CD4-positive, alpha-beta T cell (primary cell): ENCODE measurements at regions of chr1 and their contacts with region 1.

Region 1: DNA sequence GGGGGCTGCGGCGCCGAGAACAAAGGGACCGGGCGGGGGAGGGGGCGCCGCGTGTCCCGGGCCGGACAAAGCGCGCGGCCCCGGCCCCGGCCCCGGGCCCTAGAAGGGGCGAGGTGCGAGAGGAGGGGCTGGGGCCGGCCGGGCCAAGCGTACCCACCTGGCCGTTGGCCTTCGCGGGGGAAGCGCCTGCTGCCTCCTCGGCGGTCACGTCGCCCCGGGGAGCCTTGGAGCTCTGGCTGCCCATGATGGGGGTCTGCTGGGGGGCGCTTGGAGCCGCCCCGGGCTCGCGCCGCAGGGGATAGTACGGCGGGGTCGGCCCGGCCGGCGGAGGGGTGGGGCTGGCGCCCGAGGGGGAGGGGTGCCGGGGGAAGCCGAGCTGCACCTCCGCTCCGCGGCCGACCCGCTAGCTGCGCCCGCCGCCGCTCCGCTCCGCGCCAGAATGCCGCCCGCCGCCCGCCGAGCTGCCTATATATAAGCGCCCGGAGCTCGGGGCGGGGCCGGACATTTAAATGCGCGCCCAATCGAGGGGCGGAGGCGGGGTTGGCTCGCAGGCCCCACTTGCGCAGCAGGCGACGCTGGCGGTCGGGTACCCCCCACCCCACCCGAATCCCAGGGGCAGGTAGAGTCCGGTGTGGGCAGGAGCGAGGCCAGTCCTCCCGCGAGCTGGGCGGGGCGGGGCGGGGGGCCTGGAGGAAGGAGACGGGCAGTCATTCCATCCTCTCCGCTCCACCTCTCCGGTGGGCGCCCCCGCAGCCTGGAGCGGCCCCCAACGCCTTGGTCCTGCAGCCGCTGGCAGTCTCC is at the start of gene MARCKSL1:
- DNase-seq: peak; percentile 79 to 94 (median 86)
- ATAC-seq: peak; percentile 66
- H3K4me3 ChIP-seq: peak within 1 kb of the TSS; percentile 59
- H3K4me3 Mint-ChIP-seq: peak within 1 kb of the TSS; percentile 94
- H3K27ac ChIP-seq: peak within 1 kb of the TSS in 1 of 2 donors; percentile 52
- H3K27ac Mint-ChIP-seq: peak within 1 kb of the TSS; percentile 87
- H3K4me1 ChIP-seq: peaks cover 49% of the 10 kb centered on the region
- H3K4me1 Mint-ChIP-seq: peaks cover 50% of the 10 kb centered on the region
- H3K27me3 ChIP-seq: no peaks in the 10 kb centered on the region
- H3K27me3 Mint-ChIP-seq: no peaks in the 10 kb centered on the region
- CTCF ChIP-seq: no peak
- total RNA-seq, gene MARCKSL1: 23.4 to 23.6 TPM

Region 2: GRCh38 chr1:32082022-32082421 is 254.0 kb before region 1 on chr1:
- CTCF ChIA-PET with region 1: no interaction called
- POLR2A ChIA-PET with region 1: no interaction called
- intact Hi-C with region 1: no loop called
- DNase-seq: no peak
- ATAC-seq: no peak
- H3K4me3 ChIP-seq: no peak overlapping the region
- H3K4me3 Mint-ChIP-seq: no peak overlapping the region
- H3K27ac ChIP-seq: no peak overlapping the region
- H3K27ac Mint-ChIP-seq: no peak overlapping the region
- H3K4me1 ChIP-seq: no peaks in the 10 kb centered on the region
- H3K4me1 Mint-ChIP-seq: peaks cover 4% of the 10 kb centered on the region
- H3K27me3 ChIP-seq: no peaks in the 10 kb centered on the region
- H3K27me3 Mint-ChIP-seq: no peaks in the 10 kb centered on the region
- CTCF ChIP-seq: no peak

Region 3: DNA sequence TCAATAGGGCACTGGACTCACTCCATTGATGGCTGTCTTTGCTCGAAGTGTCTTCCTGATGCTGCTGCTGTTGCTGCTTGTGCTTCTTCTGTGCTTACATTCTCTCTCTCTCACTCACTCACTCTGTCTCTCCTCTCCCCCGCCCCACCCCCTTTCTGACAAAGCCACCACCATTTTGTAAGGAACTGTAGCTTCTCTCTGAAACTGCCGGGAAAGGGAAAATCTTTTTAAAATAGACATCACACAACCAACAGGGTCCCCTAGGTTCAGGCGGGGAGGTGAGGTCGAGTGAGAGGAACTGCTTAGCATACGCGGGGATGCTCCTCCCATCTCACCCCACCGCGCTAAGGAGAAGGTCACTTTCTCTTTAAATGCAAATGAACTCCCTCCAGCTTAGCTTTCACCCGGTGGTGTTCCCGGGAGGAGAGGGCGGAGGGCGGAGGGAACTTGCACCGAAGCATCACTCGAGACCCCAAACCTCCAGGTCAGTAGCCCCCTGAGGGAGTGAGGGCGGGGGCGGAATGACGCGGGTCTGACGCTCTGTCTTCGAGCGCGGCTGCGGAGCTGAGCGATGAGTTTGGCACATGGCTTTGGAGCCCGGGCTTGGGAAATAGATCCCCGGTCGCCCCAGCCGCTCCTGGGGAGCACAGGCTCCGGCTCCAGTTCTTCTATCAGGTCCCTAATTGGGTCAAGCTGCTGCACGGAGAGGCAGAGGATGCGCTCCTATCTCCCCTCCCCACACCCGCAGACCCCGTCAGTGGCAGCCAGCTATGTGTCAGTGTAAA is 135.6 kb before region 1 on chr1 and contains the start of gene CCDC28B:
- CTCF ChIA-PET with region 1: no interaction called
- POLR2A ChIA-PET with region 1: interaction called, 23 read pairs
- intact Hi-C with region 1: no loop called
- DNase-seq: peak in 13 of 14 experiments; percentile 15 to 74 (median 46)
- ATAC-seq: peak; percentile 54
- H3K4me3 ChIP-seq: peak within 1 kb of the TSS; percentile 87
- H3K4me3 Mint-ChIP-seq: peak within 1 kb of the TSS; percentile 82
- H3K27ac ChIP-seq: peak within 1 kb of the TSS; percentile 81 to 97
- H3K27ac Mint-ChIP-seq: peak within 1 kb of the TSS; percentile 95
- H3K4me1 ChIP-seq: peaks cover 75% of the 10 kb centered on the region
- H3K4me1 Mint-ChIP-seq: peaks cover 64% of the 10 kb centered on the region
- H3K27me3 ChIP-seq: no peaks in the 10 kb centered on the region
- H3K27me3 Mint-ChIP-seq: no peaks in the 10 kb centered on the region
- CTCF ChIP-seq: no peak
- total RNA-seq, gene CCDC28B: 4.0 to 5.7 TPM

Region 4: GRCh38 chr1:32240140-32240951 is 95.6 kb before region 1 on chr1:
- CTCF ChIA-PET with region 1: interaction called, 6 read pairs
- POLR2A ChIA-PET with region 1: interaction called, 24 read pairs
- intact Hi-C with region 1: loop called in 1 of 2 experiments (anchors 5 kb)
- DNase-seq: peak in 13 of 14 experiments; percentile 38 to 86 (median 63)
- ATAC-seq: peak; percentile 75
- H3K4me3 ChIP-seq: peak overlapping the region; percentile 90
- H3K4me3 Mint-ChIP-seq: peak overlapping the region; percentile 94
- H3K27ac ChIP-seq: peak overlapping the region; percentile 15 to 50
- H3K27ac Mint-ChIP-seq: peak overlapping the region; percentile 64
- H3K4me1 ChIP-seq: peaks cover 33% of the 10 kb centered on the region
- H3K4me1 Mint-ChIP-seq: peaks cover 25% of the 10 kb centered on the region
- H3K27me3 ChIP-seq: no peaks in the 10 kb centered on the region
- H3K27me3 Mint-ChIP-seq: no peaks in the 10 kb centered on the region
- CTCF ChIP-seq: peak; percentile 52

Region 5: GRCh38 chr1:32266921-32267591 is 68.9 kb before region 1 on chr1:
- CTCF ChIA-PET with region 1: no interaction called
- POLR2A ChIA-PET with region 1: interaction called, 7 read pairs
- intact Hi-C with region 1: loop called in 1 of 2 experiments (anchors 5 kb)
- DNase-seq: peak in 4 of 14 experiments; percentile 21 to 67 (median 58)
- ATAC-seq: peak; percentile 54
- H3K4me3 ChIP-seq: no peak overlapping the region
- H3K4me3 Mint-ChIP-seq: peak overlapping the region; percentile 81
- H3K27ac ChIP-seq: peak overlapping the region; percentile 52 to 57
- H3K27ac Mint-ChIP-seq: peak overlapping the region; percentile 92
- H3K4me1 ChIP-seq: peaks cover 91% of the 10 kb centered on the region
- H3K4me1 Mint-ChIP-seq: peaks cover 60% of the 10 kb centered on the region
- H3K27me3 ChIP-seq: no peaks in the 10 kb centered on the region
- H3K27me3 Mint-ChIP-seq: no peaks in the 10 kb centered on the region
- CTCF ChIP-seq: no peak

Region 6: DNA sequence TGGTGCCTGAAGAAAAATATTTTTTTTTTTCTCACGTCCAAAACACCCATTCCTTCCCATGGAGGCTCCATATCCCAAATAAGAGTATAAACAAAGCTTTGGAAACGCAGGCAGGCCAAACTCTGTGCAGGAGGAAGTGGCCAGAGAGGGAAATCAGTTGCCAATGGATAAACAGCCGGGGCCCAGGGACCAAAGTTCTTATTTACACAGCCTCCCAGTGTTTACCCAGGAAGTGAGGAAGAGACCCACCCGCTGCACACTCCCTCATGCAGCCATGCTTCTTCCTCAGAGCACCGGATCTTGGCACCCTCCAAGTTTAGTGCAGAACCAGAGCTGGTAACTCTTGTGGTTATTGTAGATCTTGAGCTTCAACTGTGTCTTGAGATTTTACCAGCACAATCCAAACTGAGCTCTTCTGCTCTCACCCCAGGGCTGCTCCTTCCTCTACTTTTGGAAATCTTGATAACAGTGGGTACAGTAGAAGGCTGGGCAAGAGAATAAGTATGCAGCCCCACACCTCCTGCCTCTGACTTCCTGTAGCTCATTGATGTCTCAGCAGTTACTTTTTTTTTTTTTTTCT is 14.2 kb before region 1 on chr1:
- CTCF ChIA-PET with region 1: interaction called, 9 read pairs
- POLR2A ChIA-PET with region 1: interaction called, 74 read pairs
- intact Hi-C with region 1: no loop called
- DNase-seq: peak in 10 of 14 experiments; percentile 7 to 70 (median 29)
- ATAC-seq: peak; percentile 87
- H3K4me3 ChIP-seq: peak overlapping the region; percentile 25
- H3K4me3 Mint-ChIP-seq: peak overlapping the region; percentile 62
- H3K27ac ChIP-seq: peak overlapping the region; percentile 12 to 49
- H3K27ac Mint-ChIP-seq: peak overlapping the region; percentile 82
- H3K4me1 ChIP-seq: peaks cover 62% of the 10 kb centered on the region
- H3K4me1 Mint-ChIP-seq: peaks cover 51% of the 10 kb centered on the region
- H3K27me3 ChIP-seq: no peaks in the 10 kb centered on the region
- H3K27me3 Mint-ChIP-seq: no peaks in the 10 kb centered on the region
- CTCF ChIP-seq: no peak

Region 7: GRCh38 chr1:32372149-32372756 is 36.3 kb after region 1 on chr1:
- CTCF ChIA-PET with region 1: interaction called, 20 read pairs
- POLR2A ChIA-PET with region 1: interaction called, 17 read pairs
- intact Hi-C with region 1: loop called (anchors 2 kb)
- DNase-seq: peak; percentile 34 to 88 (median 48)
- ATAC-seq: peak; percentile 85
- H3K4me3 ChIP-seq: no peak overlapping the region
- H3K4me3 Mint-ChIP-seq: no peak overlapping the region
- H3K27ac ChIP-seq: no peak overlapping the region
- H3K27ac Mint-ChIP-seq: peak overlapping the region; percentile 18
- H3K4me1 ChIP-seq: peaks cover 15% of the 10 kb centered on the region
- H3K4me1 Mint-ChIP-seq: peaks cover 28% of the 10 kb centered on the region
- H3K27me3 ChIP-seq: no peaks in the 10 kb centered on the region
- H3K27me3 Mint-ChIP-seq: no peaks in the 10 kb centered on the region
- CTCF ChIP-seq: peak; percentile 58

Region 8: DNA sequence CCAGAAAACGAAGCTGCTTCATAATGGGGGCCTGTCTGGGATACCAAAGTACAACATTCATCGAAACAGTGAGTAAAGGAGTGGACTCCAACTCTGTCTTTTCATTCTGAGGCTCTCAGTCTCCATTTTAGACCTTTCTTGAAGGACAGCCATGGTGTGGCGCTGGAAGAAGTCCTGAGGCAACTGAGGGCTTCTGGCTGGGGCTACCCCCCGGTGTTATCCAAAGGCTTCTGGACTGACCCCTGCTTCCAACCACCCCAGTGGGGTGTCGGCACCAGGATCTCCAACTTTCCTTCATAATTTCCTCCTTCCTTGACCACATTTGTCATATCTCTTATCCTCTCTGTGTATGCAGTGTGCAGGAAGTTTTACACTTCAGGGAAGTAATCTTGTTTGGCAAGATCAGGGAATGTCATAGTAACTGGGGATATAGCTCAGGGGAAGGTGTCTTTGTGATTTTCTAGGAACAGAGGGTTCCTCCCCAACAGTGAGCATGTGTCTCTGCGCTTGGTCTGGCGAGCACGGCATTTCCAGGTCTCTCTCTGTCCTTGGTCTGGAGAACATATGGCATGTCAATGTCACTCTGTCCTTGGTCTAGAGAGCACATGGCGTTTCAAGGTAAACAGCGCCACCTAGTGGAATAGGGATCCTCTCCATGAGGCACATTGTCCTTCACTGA is 77.7 kb after region 1 on chr1:
- CTCF ChIA-PET with region 1: no interaction called
- POLR2A ChIA-PET with region 1: no interaction called
- intact Hi-C with region 1: loop called (anchors 1 to 2 kb)
- DNase-seq: peak; percentile 48 to 91 (median 66)
- ATAC-seq: peak; percentile 83
- H3K4me3 ChIP-seq: no peak overlapping the region
- H3K4me3 Mint-ChIP-seq: no peak overlapping the region
- H3K27ac ChIP-seq: no peak overlapping the region
- H3K27ac Mint-ChIP-seq: no peak overlapping the region
- H3K4me1 ChIP-seq: peaks cover 2% of the 10 kb centered on the region
- H3K4me1 Mint-ChIP-seq: no peaks in the 10 kb centered on the region
- H3K27me3 ChIP-seq: no peaks in the 10 kb centered on the region
- H3K27me3 Mint-ChIP-seq: peaks cover 20% of the 10 kb centered on the region
- CTCF ChIP-seq: peak; percentile 84